ENCODE measurements at regions of chr17 and their contacts with region 1.

Region 1: GRCh38 chr17:76737082-76737675 is at the start of gene SRSF2:
- DNase-seq: peak; percentile 99
- H3K4me3 Mint-ChIP-seq: peak within 1 kb of the TSS; percentile 94
- H3K27ac Mint-ChIP-seq: peak within 1 kb of the TSS; percentile 98
- H3K4me1 Mint-ChIP-seq: peaks cover 41% of the 10 kb centered on the region
- H3K27me3 Mint-ChIP-seq: no peaks in the 10 kb centered on the region
- total RNA-seq, gene SRSF2: 241 to 263 TPM

Region 2: DNA sequence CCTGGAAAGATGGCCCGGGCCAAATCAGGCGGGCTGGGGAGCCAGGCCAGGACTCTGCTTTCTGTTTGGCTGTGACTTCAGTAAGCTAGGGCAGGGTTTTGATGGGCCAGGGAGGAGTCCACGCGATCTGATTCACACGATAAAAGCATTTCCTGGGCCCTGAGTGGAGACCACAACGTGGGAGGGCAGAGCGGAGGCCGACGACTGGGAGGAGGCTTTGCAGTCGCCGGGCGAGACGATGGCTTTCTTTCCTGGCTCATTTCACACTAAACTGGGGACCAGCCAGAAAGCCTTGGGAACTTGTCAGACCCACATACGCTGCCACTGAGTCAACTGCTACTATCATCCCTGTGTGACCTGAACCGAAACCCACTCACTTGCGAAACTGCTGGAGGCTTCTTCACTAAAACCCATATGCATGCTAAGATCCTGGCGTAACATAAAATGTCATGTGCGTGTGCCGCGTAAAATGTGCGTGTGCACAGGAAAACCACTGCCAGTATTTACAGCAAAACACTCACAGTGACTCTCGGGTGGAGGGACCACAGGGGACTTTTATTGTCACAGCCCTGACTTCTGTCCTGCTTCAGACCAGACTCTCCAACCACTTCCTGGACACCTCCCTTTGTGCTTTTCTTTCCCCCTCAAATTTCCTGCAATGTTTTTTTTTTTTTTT is 221.8 kb before region 1 on chr17:
- CTCF ChIA-PET with region 1: no interaction called
- intact Hi-C with region 1: loop called (anchors 1 kb)
- DNase-seq: peak; percentile 88
- H3K4me3 Mint-ChIP-seq: peak overlapping the region; percentile 62
- H3K27ac Mint-ChIP-seq: peak overlapping the region; percentile 92
- H3K4me1 Mint-ChIP-seq: peaks cover 22% of the 10 kb centered on the region
- H3K27me3 Mint-ChIP-seq: no peaks in the 10 kb centered on the region

Region 3: DNA sequence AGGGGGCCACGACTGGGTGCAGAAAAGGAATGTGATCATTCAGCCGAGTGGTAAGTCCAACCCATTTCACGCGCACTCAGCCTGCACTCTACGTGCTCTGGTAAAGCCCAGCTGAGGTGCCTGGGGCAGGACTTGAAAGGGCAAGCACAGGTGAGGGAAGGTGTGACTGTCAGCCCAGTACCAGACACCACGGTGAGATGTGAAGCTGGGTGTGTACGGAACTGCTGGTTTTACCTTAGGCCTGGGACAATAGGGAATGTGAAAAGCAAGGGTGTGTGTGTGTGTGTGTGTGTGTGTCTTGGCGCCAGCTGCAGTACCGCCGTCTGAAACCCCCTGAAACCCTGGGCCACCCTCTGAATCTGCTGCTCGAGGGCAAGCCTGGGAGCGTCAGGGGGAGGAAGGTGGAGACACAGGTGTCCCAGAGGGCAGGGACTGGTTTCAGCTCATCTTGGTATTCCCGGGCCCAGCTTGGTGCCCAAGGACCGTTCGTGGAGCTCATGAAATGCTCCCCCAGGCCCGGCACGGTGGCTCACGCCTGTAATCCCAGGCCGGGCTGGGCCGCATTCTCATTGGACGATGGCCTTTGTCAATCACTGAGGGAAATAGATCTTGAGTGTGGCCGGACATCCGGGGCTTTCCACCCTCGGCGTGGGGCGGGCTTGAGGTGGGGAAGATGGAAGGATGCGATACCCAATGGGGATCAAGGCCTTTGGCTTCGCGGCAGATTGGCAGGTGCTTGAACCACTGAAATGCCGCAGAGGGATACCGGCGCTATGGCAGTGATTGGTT is 65.9 kb before region 1 on chr17:
- CTCF ChIA-PET with region 1: no interaction called
- intact Hi-C with region 1: loop called (anchors 2 kb)
- DNase-seq: peak; percentile 100
- H3K4me3 Mint-ChIP-seq: peak overlapping the region; percentile 93
- H3K27ac Mint-ChIP-seq: peak overlapping the region; percentile 92
- H3K4me1 Mint-ChIP-seq: peaks cover 29% of the 10 kb centered on the region
- H3K27me3 Mint-ChIP-seq: no peaks in the 10 kb centered on the region

Region 4: DNA sequence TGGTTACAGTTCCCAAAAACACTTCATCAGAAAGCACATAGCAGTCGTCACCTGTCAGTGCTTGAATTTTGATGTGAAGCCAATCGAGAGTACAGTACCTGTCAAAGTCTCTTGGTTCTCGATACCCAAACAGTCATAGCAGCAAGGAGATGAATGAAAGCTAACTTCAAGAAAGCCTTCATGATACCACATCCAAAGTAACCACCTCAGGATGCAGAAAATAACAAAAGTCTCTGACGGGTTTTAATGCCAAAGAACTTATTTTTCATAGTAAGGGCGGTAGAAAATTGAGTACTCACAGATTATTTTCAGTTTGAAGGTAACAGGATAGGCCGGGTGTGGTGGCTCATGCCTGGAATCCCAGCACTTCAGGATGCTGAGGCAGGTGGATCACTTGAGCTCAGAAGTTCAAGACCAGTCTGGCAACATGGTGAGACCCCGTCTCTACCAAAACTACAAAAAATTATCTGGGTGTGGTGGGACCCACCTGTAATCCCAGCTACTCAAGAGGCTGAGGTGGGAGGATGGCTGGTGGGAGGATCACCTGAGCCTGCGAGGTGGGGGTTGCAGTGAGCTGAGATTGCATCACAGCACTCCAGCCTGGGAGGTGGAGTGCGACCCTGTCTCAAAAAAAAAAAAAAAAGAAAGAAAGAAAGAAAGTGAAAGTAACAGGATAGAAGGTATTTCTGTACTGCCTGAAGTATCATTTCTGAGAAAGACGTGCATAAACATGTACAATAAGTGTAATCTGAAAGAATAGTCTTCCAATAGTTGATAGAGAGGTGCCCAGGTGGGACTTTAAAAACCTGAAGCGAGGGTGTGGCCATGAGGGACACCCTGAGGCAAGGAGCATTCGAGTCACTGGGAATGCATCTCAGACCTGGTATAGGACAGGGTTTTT is 16.1 kb after region 1 on chr17:
- CTCF ChIA-PET with region 1: interaction called, 5 read pairs
- intact Hi-C with region 1: loop called (anchors 1 kb)
- DNase-seq: peak; percentile 70
- H3K4me3 Mint-ChIP-seq: peak overlapping the region; percentile 83
- H3K27ac Mint-ChIP-seq: peak overlapping the region; percentile 100
- H3K4me1 Mint-ChIP-seq: peaks cover 22% of the 10 kb centered on the region
- H3K27me3 Mint-ChIP-seq: no peaks in the 10 kb centered on the region

Region 5: GRCh38 chr17:76781056-76781982 is 44.1 kb after region 1 on chr17:
- CTCF ChIA-PET with region 1: no interaction called
- intact Hi-C with region 1: loop called (anchors 2 kb)
- DNase-seq: peak; percentile 40
- H3K4me3 Mint-ChIP-seq: no peak overlapping the region
- H3K27ac Mint-ChIP-seq: no peak overlapping the region
- H3K4me1 Mint-ChIP-seq: no peaks in the 10 kb centered on the region
- H3K27me3 Mint-ChIP-seq: no peaks in the 10 kb centered on the region

Region 6: DNA sequence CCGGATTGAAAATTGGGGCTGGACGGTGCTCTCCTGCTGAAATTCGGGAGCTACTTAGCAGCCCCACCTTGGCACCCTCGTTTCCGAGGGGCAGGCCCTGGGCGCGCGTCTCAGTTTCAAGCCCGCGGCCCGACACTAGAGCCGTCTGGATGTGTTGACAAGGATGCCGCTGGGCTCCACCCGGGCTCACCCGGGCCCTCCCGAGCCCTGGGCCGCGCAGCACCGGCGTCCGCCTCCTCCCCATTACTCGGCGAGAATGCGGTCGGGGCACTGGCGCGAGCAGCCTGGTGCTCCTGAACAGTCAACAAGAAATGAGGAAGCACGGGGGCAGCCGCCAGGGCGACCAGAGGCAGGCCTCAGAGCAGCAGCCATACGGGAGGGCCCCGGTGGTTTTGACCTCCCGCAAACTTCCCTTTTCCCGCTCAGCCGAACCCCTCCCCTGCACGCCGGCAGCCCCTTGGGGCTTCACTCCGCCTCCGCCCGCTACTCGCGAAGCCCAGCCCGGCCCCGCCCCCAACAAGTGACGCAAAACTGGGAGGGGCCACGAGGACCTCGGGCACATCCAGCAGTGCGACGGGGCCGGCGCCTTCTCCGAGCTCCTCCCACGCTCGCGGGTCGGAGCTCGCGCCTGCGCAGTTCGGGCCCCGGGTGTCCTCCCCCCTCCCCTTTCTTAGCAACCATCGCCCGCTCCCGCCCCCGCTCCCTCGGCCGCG is 403.1 kb after region 1 on chr17:
- CTCF ChIA-PET with region 1: no interaction called
- intact Hi-C with region 1: loop called (anchors 2 kb)
- DNase-seq: peak; percentile 100
- H3K4me3 Mint-ChIP-seq: peak overlapping the region; percentile 73
- H3K27ac Mint-ChIP-seq: peak overlapping the region; percentile 94
- H3K4me1 Mint-ChIP-seq: peaks cover 48% of the 10 kb centered on the region
- H3K27me3 Mint-ChIP-seq: no peaks in the 10 kb centered on the region

Measured in activated naive CD4-positive, alpha-beta T cell treated with anti-CD3 and anti-CD28 coated beads for 36 hours (primary cell).